ENCODE measurements at regions of chr6 and their contacts with region 1.

Region 1: DNA sequence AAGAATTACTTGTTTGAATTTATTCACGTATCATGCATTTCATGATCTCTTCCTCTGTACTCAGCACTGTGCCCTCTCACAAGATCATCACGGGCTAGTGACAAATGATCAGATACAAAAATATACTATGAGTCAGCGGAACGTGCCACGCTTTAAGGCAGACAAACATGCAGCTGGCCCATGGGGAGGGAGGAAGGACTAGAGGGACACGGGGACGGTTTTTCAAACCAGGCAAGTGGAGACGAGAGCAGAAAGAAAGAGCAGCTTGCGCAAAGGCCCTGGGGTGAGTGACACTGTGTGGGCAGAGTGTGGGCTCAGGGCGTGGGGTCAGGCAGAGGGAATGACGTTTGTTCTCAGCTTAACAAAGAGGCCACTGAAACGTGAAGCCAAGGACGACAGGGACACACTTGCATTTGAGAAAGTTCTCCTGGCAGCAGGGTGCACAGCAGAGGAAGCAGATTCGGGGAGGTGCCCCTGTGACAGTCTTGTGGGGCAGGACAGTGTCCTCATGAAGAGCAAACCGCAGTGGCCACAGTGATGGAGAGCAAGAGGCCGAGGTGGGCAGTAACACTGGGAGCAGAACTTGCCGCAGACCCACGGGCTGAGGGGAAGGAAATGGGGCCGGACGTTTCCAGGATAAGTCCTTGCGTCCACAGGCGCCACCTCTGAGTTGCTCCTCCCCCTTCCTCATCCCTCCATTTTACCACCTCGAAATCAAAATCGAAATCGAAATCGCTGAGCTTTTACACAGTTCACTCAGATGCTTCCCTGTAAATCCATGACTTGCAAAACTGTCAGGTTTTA is 6.9 kb upstream of the RPS6KA2 start:
- DNase-seq: peak in 4 of 5 donors; percentile 35 to 80 (median 60)
- ATAC-seq: peak; percentile 82 to 89 (median 86)
- H3K4me3 ChIP-seq: peak overlapping the region in 1 of 12 donors; percentile 4
- H3K27ac ChIP-seq: peak overlapping the region in 11 of 12 donors; percentile 27 to 74 (median 56)
- H3K4me1 ChIP-seq: peaks cover 3 to 52% (median 36%) of the 10 kb centered on the region in 12 donors
- H3K27me3 ChIP-seq: no peaks in the 10 kb centered on the region
- CTCF ChIP-seq: no peak
- POLR2A ChIP-seq: no peak

Region 2: DNA sequence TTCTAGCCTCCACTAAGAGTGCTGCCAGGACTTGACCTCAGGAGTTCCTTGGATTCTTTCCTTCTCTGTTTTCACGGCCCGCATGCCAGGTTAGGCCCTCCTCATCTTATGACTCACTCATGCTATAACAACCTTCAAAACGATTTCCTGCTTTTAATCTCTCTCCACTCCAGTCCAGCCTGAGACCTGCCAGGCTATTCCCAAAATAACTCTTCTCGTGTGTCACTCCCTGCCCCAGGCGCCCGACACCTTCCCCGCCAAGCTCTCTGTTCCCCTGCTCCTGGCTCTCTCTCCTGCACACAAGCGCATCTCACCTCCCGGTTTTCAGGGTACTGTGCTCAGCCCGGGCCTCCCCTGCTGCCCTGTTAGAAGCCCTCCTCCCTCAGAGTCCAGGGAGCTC is 57.3 kb after region 1 on chr6:
- intact Hi-C with region 1: loop called in 3 of 10 experiments (anchors 5 kb)
- DNase-seq: peak in 4 of 5 donors; percentile 66 to 82 (median 74)
- ATAC-seq: peak; percentile 95 to 97 (median 96)
- H3K4me3 ChIP-seq: no peak overlapping the region
- H3K27ac ChIP-seq: peak overlapping the region in 10 of 12 donors; percentile 27 to 87 (median 69)
- H3K4me1 ChIP-seq: peaks cover 0 to 22% (median 11%) of the 10 kb centered on the region in 12 donors
- H3K27me3 ChIP-seq: no peaks in the 10 kb centered on the region
- CTCF ChIP-seq: no peak
- POLR2A ChIP-seq: no peak

Measured in heart left ventricle (tissue), 16 donors.